BJ (cell line): ENCODE measurements at regions of chr4 and their contacts with region 1.

Region 1: DNA sequence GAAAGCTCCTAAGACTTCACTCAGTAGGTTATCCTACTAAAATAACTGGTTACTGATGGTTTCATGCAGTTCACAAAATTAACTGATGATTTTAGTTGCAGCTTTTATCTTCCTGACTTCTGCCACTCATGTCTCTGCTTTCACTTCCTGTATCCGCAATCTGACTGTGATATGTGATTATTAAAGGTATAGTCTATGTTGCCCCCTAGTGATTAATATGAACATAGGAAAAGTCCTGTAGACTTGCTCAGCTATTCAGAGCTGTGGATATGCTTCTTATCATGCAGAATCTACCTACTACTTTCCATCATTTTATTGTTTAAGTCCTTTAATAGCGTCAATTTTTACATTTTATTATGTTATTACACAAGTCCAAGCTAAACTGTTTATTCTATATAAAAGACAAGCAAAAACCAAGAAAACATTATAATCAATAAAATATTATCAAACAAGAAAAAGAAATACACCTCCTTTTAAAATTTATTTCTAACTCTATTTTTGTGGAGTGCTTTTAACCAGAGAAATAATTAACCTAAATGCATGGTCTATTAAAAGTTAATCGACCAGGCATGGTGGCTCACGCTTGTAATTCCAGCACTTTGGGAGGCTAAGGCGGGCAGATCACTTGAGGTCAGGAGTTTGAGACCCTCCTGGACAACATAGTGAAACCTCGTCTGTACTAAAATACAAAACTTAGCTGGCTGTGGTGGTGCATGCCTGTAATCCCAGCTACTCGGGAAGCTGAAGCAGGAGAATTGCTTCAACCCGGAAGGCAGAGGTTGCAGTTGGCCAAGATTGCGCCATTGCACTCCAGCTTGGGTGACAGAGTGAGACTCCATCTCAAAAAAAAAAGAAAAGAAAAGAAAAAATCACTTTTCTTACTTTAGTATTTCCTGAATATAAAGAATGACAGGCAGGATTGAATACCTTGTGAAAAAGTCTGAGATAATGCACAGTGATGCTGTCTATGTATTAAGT is 40.4 kb upstream of the TLR2 start:
- DNase-seq: peak; percentile 9
- H3K4me3 ChIP-seq: no peak overlapping the region
- H3K27me3 ChIP-seq: no peaks in the 10 kb centered on the region
- CTCF ChIP-seq: peak; percentile 47

Region 2: GRCh38 chr4:153296040-153296823 is 347.5 kb before region 1 on chr4:
- CTCF ChIA-PET with region 1: no interaction called
- POLR2A ChIA-PET with region 1: no interaction called
- DNase-seq: peak; percentile 40
- H3K4me3 ChIP-seq: no peak overlapping the region
- H3K27me3 ChIP-seq: no peaks in the 10 kb centered on the region
- CTCF ChIP-seq: no peak

Region 3: DNA sequence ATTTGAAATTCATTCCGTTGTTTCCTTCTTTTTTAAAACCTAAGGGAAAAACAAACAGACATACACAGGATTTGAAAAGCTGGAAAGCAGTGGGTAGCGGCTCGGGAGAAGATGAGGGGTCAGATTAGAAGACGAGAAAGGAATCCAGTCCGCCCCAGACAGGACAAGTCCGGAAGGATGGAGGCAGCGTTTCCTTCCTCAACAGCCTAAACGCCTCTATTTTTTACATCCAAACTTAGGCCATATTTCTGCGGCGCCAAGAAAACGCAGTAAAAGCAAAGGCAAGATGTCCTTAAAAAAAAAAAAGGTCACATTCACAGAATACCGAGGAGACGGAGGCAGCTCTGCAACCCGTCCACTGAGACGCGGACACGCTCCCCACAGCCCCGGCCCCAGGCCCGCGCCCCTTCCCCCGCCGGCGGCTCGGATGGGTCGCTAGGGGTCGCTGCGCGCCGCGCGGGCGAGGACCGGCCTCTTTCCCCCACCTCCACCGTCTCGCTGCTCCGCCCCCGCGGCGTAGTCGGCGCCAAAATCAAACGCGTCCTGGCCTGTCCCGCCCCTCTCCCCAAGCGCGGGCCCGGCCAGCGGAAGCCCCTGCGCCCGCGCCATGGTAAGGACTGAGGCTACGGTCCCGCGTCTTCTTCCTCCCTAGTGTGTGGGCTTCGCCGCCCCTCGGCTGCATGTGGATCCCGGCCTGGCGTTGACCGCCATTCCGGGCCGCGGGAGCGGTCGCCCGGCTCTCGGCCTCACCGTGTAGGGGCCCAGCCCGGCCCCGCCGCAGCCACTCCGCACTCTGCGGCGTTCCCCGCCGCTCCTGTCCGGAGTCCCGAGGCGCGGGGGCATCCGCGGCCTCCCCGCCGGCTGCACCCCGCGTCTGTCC is 299.3 kb before region 1 on chr4 and contains the start of gene MND1:
- CTCF ChIA-PET with region 1: interaction called, 11 read pairs
- POLR2A ChIA-PET with region 1: no interaction called
- DNase-seq: no peak
- H3K4me3 ChIP-seq: peak within 1 kb of the TSS; percentile 77
- H3K27me3 ChIP-seq: no peaks in the 10 kb centered on the region
- CTCF ChIP-seq: peak; percentile 62
- polyA plus RNA-seq, gene MND1: 0.44 and 2.2 TPM in 2 replicates

Region 4: GRCh38 chr4:153383131-153383530 is 260.6 kb before region 1 on chr4:
- CTCF ChIA-PET with region 1: no interaction called
- POLR2A ChIA-PET with region 1: no interaction called
- DNase-seq: no peak
- H3K4me3 ChIP-seq: no peak overlapping the region
- H3K27me3 ChIP-seq: no peaks in the 10 kb centered on the region
- CTCF ChIP-seq: no peak

Region 5: GRCh38 chr4:153611679-153612078 is 32.0 kb before region 1 on chr4:
- CTCF ChIA-PET with region 1: no interaction called
- POLR2A ChIA-PET with region 1: no interaction called
- DNase-seq: no peak
- H3K4me3 ChIP-seq: no peak overlapping the region
- H3K27me3 ChIP-seq: no peaks in the 10 kb centered on the region
- CTCF ChIP-seq: no peak